ENCODE measurements at regions of chr2 and their contacts with region 1.

Region 1: GRCh38 chr2:162233197-162233596 is 10.0 kb downstream of the FAP start:
- DNase-seq: no peak
- H3K4me3 ChIP-seq: peak overlapping the region; percentile 12; the same call in 1 of the 2 replicates
- H3K27ac ChIP-seq: no peak overlapping the region
- H3K27me3 ChIP-seq: no peaks in the 10 kb centered on the region
- CTCF ChIP-seq: no peak

Region 2: GRCh38 chr2:162211732-162212131 is 21.5 kb before region 1 on chr2:
- CTCF ChIA-PET with region 1: no interaction called
- POLR2A ChIA-PET with region 1: no interaction called
- DNase-seq: no peak
- H3K4me3 ChIP-seq: no peak overlapping the region
- H3K27ac ChIP-seq: no peak overlapping the region
- H3K27me3 ChIP-seq: no peaks in the 10 kb centered on the region
- CTCF ChIP-seq: no peak

Region 3: DNA sequence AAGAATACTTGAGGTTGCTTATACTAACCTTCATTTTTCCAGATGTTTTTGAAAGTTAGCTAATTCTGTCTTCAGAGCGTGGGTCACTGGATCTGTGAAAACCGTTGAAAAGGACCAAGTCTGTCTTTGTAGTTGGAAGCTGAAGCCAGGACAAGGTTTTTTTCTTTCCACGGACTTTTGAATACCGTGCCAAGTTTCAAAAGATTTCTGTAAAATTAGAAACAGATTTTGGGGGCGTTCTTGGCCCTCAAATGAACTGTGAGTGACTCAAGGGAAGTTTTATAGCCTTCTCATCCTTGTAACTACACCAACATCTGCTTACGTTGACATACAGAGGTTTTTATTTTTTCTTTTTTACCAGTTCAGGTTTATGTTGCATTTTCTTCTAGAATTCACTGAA is 10.1 kb after region 1 on chr2 and contains the start of gene FAP:
- CTCF ChIA-PET with region 1: interaction called, 3 read pairs
- POLR2A ChIA-PET with region 1: interaction called, 16 read pairs
- DNase-seq: peak; percentile 83
- H3K4me3 ChIP-seq: peak within 1 kb of the TSS; percentile 75
- H3K27ac ChIP-seq: peak within 1 kb of the TSS; percentile 90
- H3K27me3 ChIP-seq: no peaks in the 10 kb centered on the region
- CTCF ChIP-seq: no peak
- polyA plus RNA-seq, gene FAP: 300 and 374 TPM in 2 replicates

Region 4: GRCh38 chr2:162261032-162261945 is 28.1 kb after region 1 on chr2:
- CTCF ChIA-PET with region 1: no interaction called
- POLR2A ChIA-PET with region 1: no interaction called
- DNase-seq: no peak
- H3K4me3 ChIP-seq: peak overlapping the region; percentile 22
- H3K27ac ChIP-seq: peak overlapping the region; percentile 91
- H3K27me3 ChIP-seq: no peaks in the 10 kb centered on the region
- CTCF ChIP-seq: no peak

Measured in AG04450 (cell line).